HEK293T (cell line): ENCODE measurements at regions of chr1 and their contacts with region 1.

Region 1: DNA sequence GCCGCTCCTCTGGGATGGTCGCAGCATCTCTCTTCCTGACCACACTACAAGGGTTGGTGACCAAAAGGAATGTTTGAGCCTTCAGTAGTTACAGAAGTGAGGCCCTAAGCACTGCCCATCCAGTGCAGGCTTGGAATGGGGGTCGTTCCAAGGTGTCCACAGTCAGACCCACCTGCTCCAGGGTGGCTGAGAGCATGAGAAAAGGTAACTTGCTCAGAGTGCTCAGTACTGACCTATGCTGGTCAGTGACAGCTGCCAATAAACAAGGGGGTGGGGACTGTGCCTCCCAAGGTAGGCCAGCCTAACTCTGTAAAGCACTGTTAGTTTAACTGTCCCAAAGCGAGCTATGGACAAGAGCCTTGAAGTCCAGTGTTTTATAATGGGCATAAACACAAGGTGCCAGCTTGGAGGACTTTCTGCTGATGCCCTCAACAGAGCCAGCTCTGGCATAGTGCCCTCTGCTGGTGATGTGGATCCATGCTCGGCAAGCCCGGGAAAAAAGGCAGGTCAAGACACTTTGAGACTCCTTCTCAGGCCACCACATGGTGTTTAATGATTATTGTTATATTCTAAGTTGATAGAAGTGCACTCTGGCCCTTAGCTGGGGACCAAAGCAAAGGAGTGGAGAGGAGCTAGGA is 78.1 kb upstream of the DNAH14 start:
- DNase-seq: peak; percentile 85

Region 2: DNA sequence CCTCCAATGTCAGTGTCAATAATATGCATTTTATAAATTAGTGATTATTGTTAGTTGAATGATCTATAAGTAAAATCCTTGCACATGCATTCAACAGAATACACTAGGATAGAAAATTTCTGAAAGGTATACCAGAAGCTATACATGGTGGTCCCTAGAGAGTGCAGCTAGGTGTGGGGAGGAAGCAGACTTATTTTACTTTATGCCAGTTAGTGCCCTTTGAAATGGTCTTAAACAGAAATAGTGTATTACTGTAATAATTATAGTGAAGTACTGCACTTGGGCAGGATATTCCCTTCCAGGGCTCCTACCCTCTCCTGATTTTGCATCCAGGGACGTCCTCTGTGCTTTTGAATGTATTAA is 393.6 kb before region 1 on chr1:
- CTCF ChIA-PET with region 1: interaction called, 11 read pairs
- POLR2A ChIA-PET with region 1: no interaction called
- DNase-seq: no peak

Region 3: GRCh38 chr1:224506141-224506814 is 345.1 kb before region 1 on chr1:
- CTCF ChIA-PET with region 1: interaction called, 60 read pairs
- POLR2A ChIA-PET with region 1: no interaction called
- DNase-seq: no peak

Region 4: GRCh38 chr1:224513787-224514209 is 337.5 kb before region 1 on chr1:
- CTCF ChIA-PET with region 1: interaction called, 60 read pairs
- POLR2A ChIA-PET with region 1: no interaction called
- DNase-seq: peak; percentile 95

Region 5: DNA sequence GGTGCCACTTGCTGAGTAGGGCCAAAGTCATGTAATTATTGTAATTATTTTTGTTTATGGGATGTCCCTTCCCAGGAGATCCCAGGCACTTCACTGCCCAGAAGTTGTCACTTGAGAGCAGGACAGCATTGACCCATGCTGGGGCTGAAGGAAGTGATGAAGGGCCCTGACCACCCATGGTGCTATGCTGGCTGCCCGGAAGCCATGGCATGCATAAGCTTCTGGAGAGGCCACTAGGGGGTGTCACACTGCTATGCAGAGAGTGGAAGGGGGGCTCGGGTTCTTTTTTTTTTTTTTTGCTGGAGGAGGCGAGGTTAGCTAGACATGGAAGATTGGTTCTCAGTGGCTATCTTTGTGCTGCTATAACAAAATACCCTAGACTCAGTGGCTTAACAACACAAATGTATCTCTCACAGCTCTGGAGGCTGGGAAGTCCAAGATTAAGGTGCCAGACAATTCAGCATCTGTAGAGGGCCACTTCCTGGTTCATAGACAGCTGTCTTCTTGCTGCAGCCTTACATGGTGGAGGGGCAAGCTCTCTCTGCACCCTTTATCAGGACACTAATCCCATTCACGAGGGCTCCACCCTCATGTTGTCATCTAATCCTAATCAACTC is 150.3 kb before region 1 on chr1:
- CTCF ChIA-PET with region 1: interaction called, 29 read pairs
- POLR2A ChIA-PET with region 1: no interaction called
- DNase-seq: peak; percentile 82

Region 6: DNA sequence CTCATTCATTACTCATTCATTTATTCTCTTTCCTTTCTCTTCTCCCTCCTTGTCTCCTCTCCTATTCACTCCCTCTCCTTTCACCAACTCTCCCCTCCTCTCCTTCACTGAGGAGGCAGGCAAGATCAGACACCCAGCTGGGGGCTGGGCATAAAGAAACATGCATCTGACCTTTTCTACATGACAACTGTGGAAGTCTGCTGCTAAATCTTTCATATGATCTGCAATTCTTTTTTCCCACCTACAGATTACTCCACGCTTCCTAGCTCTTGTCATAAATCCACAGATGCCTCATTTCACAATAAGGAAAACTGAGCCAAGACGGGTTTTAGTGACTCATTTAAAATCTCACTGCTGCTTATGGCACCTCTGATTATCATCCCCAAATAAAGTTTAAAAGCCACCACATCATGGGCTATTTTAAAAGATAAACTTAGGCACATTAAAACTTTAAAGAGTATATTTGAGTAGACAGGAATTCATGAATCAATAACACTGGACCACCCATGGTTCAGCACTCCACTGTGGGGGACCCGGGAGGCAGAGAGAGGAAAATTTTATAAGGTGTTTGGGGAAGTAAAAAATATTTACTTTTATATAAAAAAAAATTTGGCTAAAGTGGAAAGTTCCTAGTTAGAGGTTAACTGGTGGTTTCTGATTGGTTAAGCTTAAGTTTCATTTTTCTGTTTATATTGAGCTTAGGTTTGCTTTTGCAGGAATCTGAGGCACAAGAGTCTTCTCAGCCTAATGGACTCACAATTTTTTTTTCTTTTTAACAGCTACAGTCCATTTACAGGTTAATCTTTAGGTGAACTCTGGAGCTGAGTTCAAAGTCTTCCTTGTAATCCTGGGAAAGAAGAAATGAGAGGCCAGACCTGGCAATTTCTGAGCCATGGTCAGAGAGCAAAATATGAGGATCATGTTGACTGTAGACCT is 22.4 kb after region 1 on chr1:
- CTCF ChIA-PET with region 1: interaction called, 21 read pairs
- POLR2A ChIA-PET with region 1: no interaction called
- DNase-seq: no peak

Region 7: GRCh38 chr1:224922404-224923164 is 71.3 kb after region 1 on chr1:
- CTCF ChIA-PET with region 1: interaction called, 25 read pairs
- POLR2A ChIA-PET with region 1: interaction called, 3 read pairs
- DNase-seq: peak; percentile 80